RWPE1 (cell line): ENCODE measurements at regions of chr2 and their contacts with region 1.

Region 1: DNA sequence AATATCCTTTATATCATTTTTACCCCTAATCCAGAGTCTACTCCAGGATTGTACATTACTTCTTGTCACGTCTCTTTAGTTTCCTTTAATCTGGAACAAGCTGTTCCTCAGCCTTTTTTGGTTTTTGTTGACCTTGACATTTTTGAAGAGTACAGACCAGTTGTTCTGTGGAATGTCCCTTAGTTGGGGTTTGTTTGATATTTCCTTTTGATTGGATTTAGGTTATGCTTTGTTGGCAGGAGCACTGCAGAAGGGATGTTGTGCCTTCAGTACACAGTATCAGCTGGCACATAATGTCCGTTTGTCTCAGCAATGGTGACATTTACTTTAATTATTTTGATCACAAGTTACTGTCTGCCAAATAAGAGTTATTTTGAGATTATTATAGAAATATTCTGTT is 160.6 kb downstream of the MEIS1 start:
- DNase-seq: no peak
- H3K27ac ChIP-seq: no peak overlapping the region
- CTCF ChIP-seq: no peak

Region 2: GRCh38 chr2:66301022-66301766 is 294.4 kb before region 1 on chr2:
- CTCF ChIA-PET with region 1: no interaction called
- POLR2A ChIA-PET with region 1: no interaction called
- DNase-seq: no peak
- H3K27ac ChIP-seq: no peak overlapping the region
- CTCF ChIP-seq: no peak

Region 3: DNA sequence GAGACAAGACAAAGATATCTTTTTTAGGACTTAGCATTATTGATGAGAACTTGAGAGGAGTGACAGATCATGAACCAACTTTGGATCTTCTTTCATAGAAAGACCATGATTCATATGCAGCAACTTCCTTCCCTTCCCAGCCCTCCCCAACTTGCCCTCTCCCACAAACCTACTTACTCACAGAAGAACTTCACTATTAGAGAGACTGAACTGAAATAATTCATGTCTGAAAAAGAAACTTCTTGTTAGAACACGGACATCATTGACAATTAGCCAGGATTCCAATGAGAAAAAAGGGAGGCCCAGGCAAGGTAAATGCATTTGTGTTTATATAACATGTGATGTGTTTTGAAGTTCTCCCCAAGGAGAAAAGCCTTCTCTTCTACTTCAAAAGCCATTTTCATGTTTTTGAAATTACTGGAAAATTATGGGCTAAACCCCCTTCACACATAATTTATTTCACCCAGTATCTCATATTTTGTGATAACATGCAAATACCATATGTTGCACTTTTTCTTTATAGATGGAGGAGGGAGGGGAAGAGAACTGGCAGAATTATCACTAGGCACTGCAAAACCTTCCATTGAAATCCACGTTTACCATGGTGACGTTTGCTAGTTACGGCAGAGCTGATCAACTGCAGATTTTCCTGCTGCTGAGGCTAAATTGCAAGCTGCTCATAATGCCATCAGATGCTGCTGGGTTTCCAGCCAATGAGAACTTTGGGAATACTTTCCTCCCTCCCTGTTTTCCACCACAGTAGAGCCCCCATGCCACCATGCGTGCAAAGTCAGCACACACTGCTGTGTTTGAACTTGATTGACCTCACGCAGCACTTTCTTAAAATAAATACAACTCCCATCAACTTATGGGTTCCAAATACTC is 134.1 kb after region 1 on chr2:
- CTCF ChIA-PET with region 1: no interaction called
- POLR2A ChIA-PET with region 1: no interaction called
- DNase-seq: no peak
- H3K27ac ChIP-seq: no peak overlapping the region
- CTCF ChIP-seq: no peak

Region 4: DNA sequence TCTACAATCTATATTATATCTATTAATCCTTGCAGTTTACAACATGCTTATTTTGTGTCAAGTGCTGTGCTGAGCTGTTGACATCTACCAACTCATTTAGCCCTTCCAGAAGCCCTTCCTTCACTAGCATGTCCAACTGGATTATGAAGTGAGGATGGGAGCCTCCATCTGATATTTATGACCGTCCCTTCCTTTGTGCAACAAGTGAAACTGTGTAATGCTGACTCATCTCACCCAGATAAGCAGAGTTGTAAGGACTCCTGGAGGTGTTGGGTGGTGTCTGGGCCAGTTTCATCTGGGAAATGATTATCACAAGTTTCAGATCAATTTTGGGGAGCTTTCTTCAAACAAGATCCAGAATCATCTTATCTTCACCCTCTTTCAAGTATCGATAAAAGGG is 645.0 kb after region 1 on chr2:
- CTCF ChIA-PET with region 1: no interaction called
- POLR2A ChIA-PET with region 1: interaction called, 10 read pairs
- DNase-seq: no peak
- H3K27ac ChIP-seq: no peak overlapping the region
- CTCF ChIP-seq: no peak